Right cardiac atrium (tissue), 5 donors: ENCODE measurements at regions of chr6 and their contacts with region 1.

Region 1: GRCh38 chr6:144013486-144013909 is 5.4 kb upstream of the PLAGL1 start:
- DNase-seq: peak; percentile 81 to 90 (median 87)
- ATAC-seq: peak in 1 of 2 donors; percentile 62
- H3K4me3 ChIP-seq: no peak overlapping the region
- H3K27ac ChIP-seq: no peak overlapping the region
- H3K4me1 ChIP-seq: no peaks in the 10 kb centered on the region
- H3K27me3 ChIP-seq: no peaks in the 10 kb centered on the region

Region 2: DNA sequence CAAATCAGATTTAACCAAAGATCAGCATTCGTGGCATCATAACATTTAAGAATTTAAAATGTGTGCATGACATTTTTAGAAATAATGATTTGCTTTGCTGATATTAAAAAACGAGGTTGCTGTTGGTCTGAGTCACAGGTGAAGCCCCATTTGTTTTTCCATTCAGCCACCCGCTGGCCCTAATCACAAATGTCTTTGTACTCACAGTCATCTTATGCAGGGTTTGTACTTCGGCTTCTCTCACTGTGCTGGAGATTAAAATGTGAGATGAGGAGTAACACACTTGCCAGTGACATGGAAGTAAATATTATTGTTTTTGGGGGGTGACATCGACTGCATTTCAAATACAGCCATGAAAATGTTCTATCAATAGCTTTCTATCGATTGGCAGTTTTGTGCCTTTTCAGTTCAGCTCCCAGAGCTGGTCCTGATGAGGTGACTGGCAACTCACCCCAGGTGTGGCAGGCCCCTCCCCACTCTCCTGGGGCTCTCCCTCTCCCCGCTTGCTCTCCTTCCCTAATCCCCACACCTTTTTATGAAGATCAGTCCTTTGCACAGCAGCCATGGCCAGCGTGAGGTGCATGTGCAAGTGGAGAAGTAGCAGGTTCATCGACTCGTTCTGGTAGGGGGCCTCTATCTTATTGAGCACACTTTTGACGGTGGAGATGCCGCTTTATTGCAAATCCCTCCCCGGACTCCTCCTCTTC is 443.2 kb before region 1 on chr6:
- intact Hi-C with region 1: loop called (anchors 1 to 5 kb)
- DNase-seq: no peak
- ATAC-seq: no peak
- H3K4me3 ChIP-seq: no peak overlapping the region
- H3K27ac ChIP-seq: no peak overlapping the region
- H3K4me1 ChIP-seq: no peaks in the 10 kb centered on the region
- H3K27me3 ChIP-seq: no peaks in the 10 kb centered on the region

Region 3: GRCh38 chr6:143575440-143575839 is 438.1 kb before region 1 on chr6:
- intact Hi-C with region 1: loop called (anchors 1 to 5 kb)
- DNase-seq: no peak
- ATAC-seq: peak; percentile 81 to 88
- H3K4me3 ChIP-seq: no peak overlapping the region
- H3K27ac ChIP-seq: no peak overlapping the region
- H3K4me1 ChIP-seq: no peaks in the 10 kb centered on the region
- H3K27me3 ChIP-seq: no peaks in the 10 kb centered on the region

Region 4: GRCh38 chr6:143940011-143940597 is 73.4 kb before region 1 on chr6:
- intact Hi-C with region 1: loop called in 2 of 4 experiments (anchors 5 kb)
- DNase-seq: no peak
- ATAC-seq: no peak
- H3K4me3 ChIP-seq: no peak overlapping the region
- H3K27ac ChIP-seq: no peak overlapping the region
- H3K4me1 ChIP-seq: no peaks in the 10 kb centered on the region
- H3K27me3 ChIP-seq: no peaks in the 10 kb centered on the region